T-cell (primary cell): ENCODE measurements at regions of chr20 and their contacts with region 1.

Region 1: GRCh38 chr20:52972190-52972937 is at the start of gene TSHZ2:
- DNase-seq: peak in 34 of 35 experiments; percentile 9 to 58 (median 40)
- ATAC-seq: peak; percentile 46 to 56 (median 51)
- H3K4me3 ChIP-seq: peak within 1 kb of the TSS; percentile 17 to 59
- H3K4me3 Mint-ChIP-seq: peak within 1 kb of the TSS; percentile 89 to 99 (median 92)
- H3K27ac ChIP-seq: peak within 1 kb of the TSS; percentile 63
- H3K27ac Mint-ChIP-seq: peak within 1 kb of the TSS; percentile 92 to 96
- H3K4me1 ChIP-seq: peaks cover 0 to 8% of the 10 kb centered on the region in 2 experiments
- H3K4me1 Mint-ChIP-seq: peaks cover 20 to 45% (median 40%) of the 10 kb centered on the region in 3 donors
- H3K27me3 ChIP-seq: peaks cover 4 to 18% of the 10 kb centered on the region in 2 experiments
- H3K27me3 Mint-ChIP-seq: peaks cover 9 to 24% of the 10 kb centered on the region in 2 donors
- total RNA-seq, gene TSHZ2: 20.2 to 42.9 (median 25.8) TPM

Region 2: GRCh38 chr20:52410182-52410647 is 562.1 kb before region 1 on chr20:
- CTCF ChIA-PET with region 1: no interaction called
- POLR2A ChIA-PET with region 1: interaction called in 1 of 2 experiments, 16 read pairs
- DNase-seq: peak; percentile 29 to 90 (median 63)
- ATAC-seq: peak; percentile 86 to 93 (median 92)
- H3K4me3 ChIP-seq: peak overlapping the region in 1 of 2 donors; percentile 3
- H3K4me3 Mint-ChIP-seq: peak overlapping the region; percentile 65 to 73 (median 71)
- H3K27ac ChIP-seq: peak overlapping the region; percentile 96
- H3K27ac Mint-ChIP-seq: peak overlapping the region; percentile 99
- H3K4me1 ChIP-seq: peaks cover 30 to 58% of the 10 kb centered on the region in 2 experiments
- H3K4me1 Mint-ChIP-seq: peaks cover 66 to 85% (median 80%) of the 10 kb centered on the region in 3 donors
- H3K27me3 ChIP-seq: no peaks in the 10 kb centered on the region
- H3K27me3 Mint-ChIP-seq: no peaks in the 10 kb centered on the region

Region 3: DNA sequence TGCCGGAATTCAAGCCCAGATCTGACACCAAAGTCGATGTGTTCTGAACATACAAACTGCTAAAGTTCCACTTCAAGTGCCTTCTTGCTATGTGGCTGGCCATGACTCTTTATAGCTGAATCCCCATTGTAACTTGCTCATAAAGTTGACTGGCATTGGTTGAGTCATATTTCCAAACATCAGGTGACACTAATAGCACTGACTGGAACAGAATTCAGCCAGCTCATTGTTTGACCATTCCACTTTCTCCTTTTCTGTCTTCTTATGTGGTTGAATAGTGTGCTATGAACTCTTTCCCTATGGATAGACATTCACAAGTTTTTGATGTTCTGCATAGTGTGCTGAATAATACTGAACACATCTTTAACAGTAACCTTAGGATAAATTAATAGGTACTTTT is 514.5 kb before region 1 on chr20:
- CTCF ChIA-PET with region 1: no interaction called
- POLR2A ChIA-PET with region 1: no interaction called
- DNase-seq: no peak
- ATAC-seq: no peak
- H3K4me3 ChIP-seq: no peak overlapping the region
- H3K4me3 Mint-ChIP-seq: no peak overlapping the region
- H3K27ac ChIP-seq: no peak overlapping the region
- H3K27ac Mint-ChIP-seq: no peak overlapping the region
- H3K4me1 ChIP-seq: no peaks in the 10 kb centered on the region
- H3K4me1 Mint-ChIP-seq: peaks cover 0 to 6% (median 1%) of the 10 kb centered on the region in 3 donors
- H3K27me3 ChIP-seq: no peaks in the 10 kb centered on the region
- H3K27me3 Mint-ChIP-seq: peaks cover 6 to 7% of the 10 kb centered on the region in 2 donors

Region 4: GRCh38 chr20:52766645-52767435 is 205.5 kb before region 1 on chr20:
- CTCF ChIA-PET with region 1: no interaction called
- POLR2A ChIA-PET with region 1: no interaction called
- DNase-seq: no peak
- ATAC-seq: no peak
- H3K4me3 ChIP-seq: no peak overlapping the region
- H3K4me3 Mint-ChIP-seq: no peak overlapping the region
- H3K27ac ChIP-seq: no peak overlapping the region
- H3K27ac Mint-ChIP-seq: no peak overlapping the region
- H3K4me1 ChIP-seq: no peaks in the 10 kb centered on the region
- H3K4me1 Mint-ChIP-seq: no peaks in the 10 kb centered on the region
- H3K27me3 ChIP-seq: peaks cover 0 to 2% of the 10 kb centered on the region in 2 experiments
- H3K27me3 Mint-ChIP-seq: peaks cover 0 to 3% of the 10 kb centered on the region in 2 donors

Region 5: DNA sequence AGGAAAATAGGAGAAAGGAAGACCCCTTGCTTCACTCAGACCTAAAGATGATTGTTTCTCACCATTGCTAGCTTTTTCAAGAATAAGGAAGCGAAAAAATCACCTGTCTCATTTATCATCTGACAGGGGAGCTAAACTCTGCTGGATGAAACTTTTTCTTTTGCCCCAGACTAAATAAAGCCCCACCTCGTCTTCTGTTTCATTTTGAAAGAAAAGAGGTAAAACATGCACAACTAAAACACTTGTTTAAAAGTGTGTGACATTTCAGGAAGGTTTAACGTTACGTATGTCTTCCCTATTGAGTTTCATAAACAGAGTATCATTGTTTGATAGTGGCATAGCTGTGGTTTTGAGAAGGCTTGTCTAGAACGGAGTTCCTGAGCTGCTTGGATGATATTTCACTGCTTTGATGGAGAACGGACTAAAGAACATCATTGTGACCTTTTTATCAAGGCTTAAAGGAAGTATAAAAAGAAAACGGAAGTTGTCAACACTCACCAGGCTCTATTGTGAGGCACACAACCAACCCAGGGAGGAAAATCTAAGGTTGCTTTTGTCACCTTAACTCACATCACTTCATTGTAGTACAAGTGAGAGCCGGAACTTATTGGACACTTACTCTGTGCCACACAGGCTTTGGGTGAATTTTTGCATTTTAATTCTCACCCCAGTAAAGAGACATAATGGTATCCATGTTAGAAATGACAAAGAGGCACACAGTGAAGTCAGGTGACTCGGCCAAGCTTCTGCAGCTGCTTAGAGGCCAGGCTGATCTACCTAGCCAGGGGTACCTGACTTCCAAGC is 29.3 kb after region 1 on chr20:
- CTCF ChIA-PET with region 1: no interaction called
- POLR2A ChIA-PET with region 1: interaction called, 10 to 32 read pairs
- DNase-seq: peak in 17 of 35 experiments; percentile 3 to 62 (median 11)
- ATAC-seq: peak; percentile 65 to 84 (median 68)
- H3K4me3 ChIP-seq: peak overlapping the region in 1 of 2 donors; percentile 22
- H3K4me3 Mint-ChIP-seq: peak overlapping the region; percentile 67 to 81 (median 68)
- H3K27ac ChIP-seq: peak overlapping the region; percentile 78
- H3K27ac Mint-ChIP-seq: peak overlapping the region; percentile 95 to 96
- H3K4me1 ChIP-seq: peaks cover 7 to 30% of the 10 kb centered on the region in 2 experiments
- H3K4me1 Mint-ChIP-seq: peaks cover 56 to 85% (median 71%) of the 10 kb centered on the region in 3 donors
- H3K27me3 ChIP-seq: peaks cover 0 to 3% of the 10 kb centered on the region in 2 experiments
- H3K27me3 Mint-ChIP-seq: peaks cover 0 to 7% of the 10 kb centered on the region in 2 donors